ENCODE measurements at regions of chr22 and their contacts with region 1.

Region 1: DNA sequence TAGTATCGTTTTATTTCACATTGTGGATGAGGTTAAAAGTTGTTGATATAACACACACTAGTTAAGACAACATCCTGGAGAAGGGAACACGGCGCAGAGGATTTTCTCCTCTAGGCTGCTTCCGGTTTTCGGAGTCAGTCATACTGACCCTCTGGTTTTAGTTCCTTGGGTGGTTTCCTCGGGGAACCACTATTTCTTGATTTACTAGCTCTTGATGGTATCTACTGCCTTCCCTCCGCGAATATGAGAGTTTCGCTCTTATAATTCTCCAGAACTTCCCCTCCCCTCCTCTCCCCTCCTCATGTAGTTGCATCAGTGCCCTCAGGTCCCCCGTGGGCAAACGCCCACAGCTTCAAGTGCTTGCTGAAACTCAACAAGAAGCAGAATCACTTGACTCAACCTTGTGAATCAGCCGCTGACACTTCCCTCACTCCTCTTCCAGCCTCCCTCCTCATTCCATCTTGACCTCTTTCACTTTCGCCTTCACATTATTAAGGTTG is 15.9 kb upstream of the APOBEC3A start:
- DNase-seq: peak; percentile 36
- H3K4me3 Mint-ChIP-seq: peak overlapping the region; percentile 50
- H3K27ac Mint-ChIP-seq: peak overlapping the region; percentile 84
- H3K4me1 Mint-ChIP-seq: peaks cover 27% of the 10 kb centered on the region
- H3K27me3 Mint-ChIP-seq: peaks cover 36% of the 10 kb centered on the region

Region 2: DNA sequence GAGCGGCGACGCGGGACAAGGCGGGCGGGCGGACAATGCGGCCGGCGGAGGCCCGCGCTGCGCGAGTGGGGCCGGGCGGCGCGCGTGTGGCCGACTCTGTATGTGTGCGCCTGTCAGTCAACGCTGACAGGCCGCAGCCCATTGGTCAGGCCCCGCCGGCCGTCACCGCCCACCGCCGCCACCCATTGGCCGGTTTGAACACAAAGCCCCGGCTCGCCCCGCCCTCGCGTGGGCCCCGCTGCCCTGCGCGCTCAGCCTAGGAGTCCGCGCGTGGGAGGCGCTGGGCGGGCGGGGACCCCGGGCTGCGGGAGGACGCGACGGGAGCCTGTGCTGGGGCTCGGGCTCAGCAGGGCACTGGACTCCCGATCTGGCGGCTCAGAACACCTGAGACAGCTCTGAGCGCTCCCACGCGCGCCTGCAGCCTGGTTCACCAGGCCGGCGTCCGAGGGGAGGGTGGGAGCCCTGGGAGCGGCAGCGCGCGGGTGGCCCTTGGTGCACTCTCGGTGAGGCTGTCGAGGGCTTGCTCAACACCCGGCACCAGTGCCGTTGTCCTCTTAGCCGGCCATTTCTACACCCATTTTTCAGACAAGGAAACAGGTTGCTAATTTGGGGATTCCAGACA is 185.5 kb before region 1 on chr22 and contains the start of gene SUN2:
- intact Hi-C with region 1: loop called (anchors 10 kb)
- DNase-seq: peak; percentile 91
- H3K4me3 Mint-ChIP-seq: peak within 1 kb of the TSS; percentile 96
- H3K27ac Mint-ChIP-seq: peak within 1 kb of the TSS; percentile 95
- H3K4me1 Mint-ChIP-seq: peaks cover 49% of the 10 kb centered on the region
- H3K27me3 Mint-ChIP-seq: no peaks in the 10 kb centered on the region
- total RNA-seq, gene SUN2: 121 and 123 TPM in 2 replicates

Region 3: DNA sequence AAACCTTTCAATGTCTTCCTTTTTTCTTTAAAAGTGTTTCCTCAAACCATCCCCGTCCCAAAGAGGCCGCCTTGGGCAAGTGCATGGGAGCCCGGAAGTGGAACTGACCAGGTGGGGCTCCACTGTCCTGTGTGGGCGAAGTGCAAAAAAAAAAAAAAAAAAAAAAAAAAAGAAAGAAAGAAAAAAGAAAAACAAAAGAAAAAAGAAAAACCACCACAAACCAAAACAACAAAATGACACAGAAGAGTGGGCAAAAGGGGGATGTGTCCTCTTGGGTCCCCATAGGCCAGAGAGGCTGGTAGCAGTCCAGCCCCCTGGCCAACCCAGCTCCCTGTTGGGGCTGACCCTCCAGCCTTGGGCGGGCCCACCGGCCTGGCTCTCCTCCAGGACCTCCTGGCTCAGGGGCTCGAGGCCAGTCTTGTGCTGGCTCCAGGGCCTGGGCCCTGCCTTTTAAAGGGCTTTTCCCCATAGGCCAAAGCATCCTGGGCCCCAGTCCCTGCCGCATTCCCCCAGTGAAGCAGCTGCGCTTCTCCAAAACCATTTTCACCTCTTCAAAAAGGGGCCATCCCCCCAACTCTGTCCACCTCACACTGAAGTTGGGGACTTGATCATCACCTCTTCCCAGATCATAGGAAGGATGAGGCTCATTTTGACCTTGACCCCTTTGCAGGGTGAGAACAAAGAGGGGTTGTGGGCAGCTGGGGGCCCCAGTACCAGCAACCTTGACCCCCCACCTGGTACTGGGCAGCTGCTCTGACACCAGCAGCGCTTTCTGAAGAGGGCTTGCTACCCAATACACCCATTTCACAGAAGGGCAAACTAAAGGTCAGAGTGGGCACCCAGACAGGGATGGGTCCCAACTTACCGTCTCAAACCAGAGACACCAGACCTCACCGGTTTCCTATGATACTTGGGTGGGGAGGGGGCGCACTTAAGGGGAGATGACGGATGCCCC is 78.9 kb before region 1 on chr22:
- intact Hi-C with region 1: no loop called
- DNase-seq: no peak
- H3K4me3 Mint-ChIP-seq: no peak overlapping the region
- H3K27ac Mint-ChIP-seq: no peak overlapping the region
- H3K4me1 Mint-ChIP-seq: peaks cover 2% of the 10 kb centered on the region
- H3K27me3 Mint-ChIP-seq: peaks cover under 1% of the 10 kb centered on the region

Region 4: GRCh38 chr22:38927033-38927781 is 14.3 kb before region 1 on chr22:
- intact Hi-C with region 1: no loop called
- DNase-seq: peak; percentile 28
- H3K4me3 Mint-ChIP-seq: no peak overlapping the region
- H3K27ac Mint-ChIP-seq: no peak overlapping the region
- H3K4me1 Mint-ChIP-seq: peaks cover 4% of the 10 kb centered on the region
- H3K27me3 Mint-ChIP-seq: peaks cover 38% of the 10 kb centered on the region

Region 5: GRCh38 chr22:38953577-38954413 is 12.3 kb after region 1 on chr22:
- intact Hi-C with region 1: loop called (anchors 1 kb)
- DNase-seq: peak; percentile 72
- H3K4me3 Mint-ChIP-seq: no peak overlapping the region
- H3K27ac Mint-ChIP-seq: peak overlapping the region; percentile 90
- H3K4me1 Mint-ChIP-seq: peaks cover 42% of the 10 kb centered on the region
- H3K27me3 Mint-ChIP-seq: peaks cover 6% of the 10 kb centered on the region

Region 6: GRCh38 chr22:39097098-39098020 is 155.8 kb after region 1 on chr22 and contains the start of gene APOBEC3H:
- intact Hi-C with region 1: loop called (anchors 5 kb)
- DNase-seq: peak; percentile 31
- H3K4me3 Mint-ChIP-seq: peak within 1 kb of the TSS; percentile 75
- H3K27ac Mint-ChIP-seq: peak within 1 kb of the TSS; percentile 92
- H3K4me1 Mint-ChIP-seq: peaks cover 66% of the 10 kb centered on the region
- H3K27me3 Mint-ChIP-seq: no peaks in the 10 kb centered on the region
- total RNA-seq, gene APOBEC3H: 7.3 and 8.3 TPM in 2 replicates

Region 7: DNA sequence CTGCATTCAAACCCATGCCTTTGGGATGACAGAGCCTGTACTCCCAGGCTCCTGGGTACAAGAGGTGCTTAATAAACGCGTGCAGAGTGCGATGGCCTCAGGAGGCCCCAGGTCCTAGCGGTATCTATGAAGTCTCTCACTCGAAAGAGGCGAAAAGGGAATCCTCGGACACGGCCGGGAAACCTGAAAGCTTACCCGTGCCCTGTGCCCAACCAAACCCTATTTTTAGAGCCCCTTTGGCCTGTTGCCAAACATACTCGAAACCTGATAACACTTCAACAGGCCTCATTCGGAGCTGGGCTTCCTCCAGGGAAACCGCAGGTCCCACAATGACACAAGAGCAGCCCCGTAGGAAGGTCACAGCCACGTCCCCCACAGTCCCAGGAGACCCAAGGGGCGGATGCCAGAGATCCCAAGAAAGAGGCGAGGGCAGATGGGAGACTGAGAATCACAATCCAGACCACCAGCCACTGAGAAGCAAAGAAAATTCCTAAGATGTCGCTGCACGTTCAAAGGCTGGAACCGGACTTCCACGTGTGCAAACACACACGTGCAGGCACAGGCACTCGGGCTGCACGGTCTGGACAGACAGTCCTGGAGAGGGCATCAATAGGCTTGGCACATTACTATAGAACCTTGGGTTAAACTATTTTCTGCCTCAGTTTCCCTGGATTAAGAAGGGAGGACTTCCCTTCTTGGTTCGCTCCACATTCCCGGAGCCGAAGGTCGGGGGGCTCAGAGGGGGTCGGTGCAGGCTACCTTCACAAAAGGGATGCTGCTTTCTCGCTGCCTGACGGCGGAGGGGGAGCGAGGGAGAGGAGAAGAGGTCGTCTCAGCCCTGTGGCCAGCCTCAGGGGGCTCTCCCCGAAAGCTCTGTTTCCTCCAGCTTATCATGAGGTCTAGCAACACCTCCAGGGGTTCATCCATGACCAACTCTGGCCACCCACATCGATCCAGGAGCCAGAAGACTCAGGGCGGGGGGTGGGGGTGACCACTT is 295.1 kb after region 1 on chr22:
- intact Hi-C with region 1: loop called (anchors 10 kb)
- DNase-seq: no peak
- H3K4me3 Mint-ChIP-seq: peak overlapping the region; percentile 37
- H3K27ac Mint-ChIP-seq: peak overlapping the region; percentile 1
- H3K4me1 Mint-ChIP-seq: peaks cover 40% of the 10 kb centered on the region
- H3K27me3 Mint-ChIP-seq: peaks cover 65% of the 10 kb centered on the region